Transverse colon (tissue), 4 donors: ENCODE measurements at regions of chr7 and their contacts with region 1.

Region 1: GRCh38 chr7:21580073-21580521 is 37.3 kb downstream of the DNAH11 start:
- DNase-seq: no peak
- H3K4me3 ChIP-seq: no peak overlapping the region
- H3K27ac ChIP-seq: peak overlapping the region in 1 of 4 donors; percentile 21
- H3K4me1 ChIP-seq: no peaks in the 10 kb centered on the region
- H3K27me3 ChIP-seq: no peaks in the 10 kb centered on the region
- CTCF ChIP-seq: no peak
- EP300 ChIP-seq: no peak
- POLR2A ChIP-seq: no peak

Region 2: GRCh38 chr7:21596801-21597200 is 16.7 kb after region 1 on chr7:
- in situ Hi-C with region 1: no loop called
- intact Hi-C with region 1: loop called (anchors 1 kb)
- DNase-seq: no peak
- H3K4me3 ChIP-seq: no peak overlapping the region
- H3K27ac ChIP-seq: no peak overlapping the region
- H3K4me1 ChIP-seq: no peaks in the 10 kb centered on the region
- H3K27me3 ChIP-seq: no peaks in the 10 kb centered on the region
- CTCF ChIP-seq: no peak
- EP300 ChIP-seq: no peak
- POLR2A ChIP-seq: no peak

Region 3: DNA sequence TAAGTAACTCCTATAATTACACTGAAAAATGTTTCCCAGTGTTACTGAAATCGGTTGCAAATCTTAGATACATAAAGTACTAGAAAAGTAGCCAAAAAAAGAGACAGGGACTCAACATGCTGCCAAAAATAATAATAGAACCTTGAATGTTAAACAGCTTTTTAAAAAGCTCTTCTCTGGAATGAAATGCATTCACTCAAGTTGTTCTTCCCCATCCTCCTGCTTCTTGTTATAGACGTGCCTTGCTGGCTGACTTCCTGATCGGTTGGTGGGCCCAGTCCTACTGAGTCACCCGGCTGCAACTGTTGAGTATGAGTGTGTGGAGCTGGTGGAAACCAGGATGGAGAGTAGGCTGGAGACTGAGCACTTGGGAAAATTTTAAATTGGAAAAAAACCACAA is 807.5 kb after region 1 on chr7:
- in situ Hi-C with region 1: no loop called
- intact Hi-C with region 1: no loop called
- DNase-seq: no peak
- H3K4me3 ChIP-seq: no peak overlapping the region
- H3K27ac ChIP-seq: no peak overlapping the region
- H3K4me1 ChIP-seq: no peaks in the 10 kb centered on the region
- H3K27me3 ChIP-seq: no peaks in the 10 kb centered on the region
- CTCF ChIP-seq: no peak
- EP300 ChIP-seq: no peak
- POLR2A ChIP-seq: no peak